HEK293 (cell line): ENCODE measurements at regions of chr7 and their contacts with region 1.

Region 1: DNA sequence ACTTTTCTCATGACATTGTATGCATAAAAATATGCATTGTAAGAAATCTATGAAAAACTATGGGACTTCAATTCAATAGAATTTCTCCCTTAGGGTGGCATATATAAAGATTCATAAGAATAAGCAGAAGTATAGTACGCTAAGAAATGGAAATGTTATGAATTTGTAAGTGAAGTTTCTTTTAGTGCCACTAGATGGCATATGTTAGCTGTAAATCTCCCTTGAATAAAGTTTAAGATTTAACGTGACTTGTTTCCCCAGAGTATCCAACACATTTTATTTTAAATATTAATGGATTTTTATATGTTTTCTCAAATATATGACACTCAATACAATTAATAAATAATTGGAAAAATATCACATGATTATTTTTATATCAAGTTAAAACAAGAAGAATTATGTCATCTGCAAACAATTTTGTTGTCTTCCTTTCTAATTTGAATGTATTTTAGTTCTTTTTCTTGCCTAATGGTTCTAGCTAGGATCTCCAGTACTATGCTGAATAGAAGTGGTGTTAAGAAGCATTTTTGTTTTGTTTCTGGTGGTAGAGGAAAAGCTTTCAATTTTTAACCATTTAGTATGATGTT is 287.2 kb downstream of the HGF start:
- H3K4me3 ChIP-seq: no peak overlapping the region
- H3K27ac ChIP-seq: no peak overlapping the region
- H3K4me1 ChIP-seq: no peaks in the 10 kb centered on the region
- CTCF ChIP-seq: no peak

Region 2: DNA sequence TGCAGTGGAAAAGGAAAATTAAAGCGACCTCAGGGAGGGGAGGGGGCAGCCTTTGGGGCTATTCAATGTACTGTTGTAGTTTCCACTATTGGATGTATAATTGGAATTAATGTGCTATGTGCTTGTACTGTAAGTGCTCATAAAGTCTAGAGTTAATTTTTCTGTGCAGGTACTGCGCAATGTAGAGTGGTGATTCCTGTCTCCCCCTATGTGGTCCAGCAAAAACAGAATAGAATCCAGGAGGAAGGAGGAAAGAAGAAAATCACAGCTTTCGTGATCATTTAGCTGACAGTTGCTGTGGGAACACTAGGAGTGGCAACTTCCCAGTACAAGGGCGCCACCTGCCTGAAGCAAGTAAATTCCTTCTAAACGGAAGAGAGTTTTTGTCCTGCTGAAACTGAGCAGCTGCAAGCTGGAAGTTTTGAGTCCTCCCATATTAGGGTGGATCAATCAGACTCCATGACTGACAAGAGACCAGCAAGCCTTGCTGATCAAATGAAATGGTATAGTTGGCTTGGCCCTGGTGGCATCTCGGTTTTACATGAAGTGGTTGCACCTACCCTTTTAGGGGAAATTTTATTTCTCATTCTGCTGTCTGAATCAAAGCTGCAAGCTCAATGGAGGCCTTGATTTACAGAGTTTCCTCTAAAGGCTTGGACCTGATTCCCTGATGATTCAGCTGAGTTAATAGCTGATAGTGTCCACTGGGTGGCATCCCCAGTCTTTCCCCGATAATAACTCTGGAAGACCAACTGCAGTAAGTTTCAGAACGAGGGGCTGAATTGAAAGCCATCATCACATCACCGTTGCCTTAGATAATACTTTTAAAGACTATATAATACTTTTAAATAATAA is 12.6 kb before region 1 on chr7:
- CTCF ChIA-PET with region 1: interaction called, 10 read pairs
- POLR2A ChIA-PET with region 1: no interaction called
- H3K4me3 ChIP-seq: no peak overlapping the region
- H3K27ac ChIP-seq: no peak overlapping the region
- H3K4me1 ChIP-seq: no peaks in the 10 kb centered on the region
- CTCF ChIP-seq: peak; percentile 77; the same call in 1 of the 2 replicates

Region 3: DNA sequence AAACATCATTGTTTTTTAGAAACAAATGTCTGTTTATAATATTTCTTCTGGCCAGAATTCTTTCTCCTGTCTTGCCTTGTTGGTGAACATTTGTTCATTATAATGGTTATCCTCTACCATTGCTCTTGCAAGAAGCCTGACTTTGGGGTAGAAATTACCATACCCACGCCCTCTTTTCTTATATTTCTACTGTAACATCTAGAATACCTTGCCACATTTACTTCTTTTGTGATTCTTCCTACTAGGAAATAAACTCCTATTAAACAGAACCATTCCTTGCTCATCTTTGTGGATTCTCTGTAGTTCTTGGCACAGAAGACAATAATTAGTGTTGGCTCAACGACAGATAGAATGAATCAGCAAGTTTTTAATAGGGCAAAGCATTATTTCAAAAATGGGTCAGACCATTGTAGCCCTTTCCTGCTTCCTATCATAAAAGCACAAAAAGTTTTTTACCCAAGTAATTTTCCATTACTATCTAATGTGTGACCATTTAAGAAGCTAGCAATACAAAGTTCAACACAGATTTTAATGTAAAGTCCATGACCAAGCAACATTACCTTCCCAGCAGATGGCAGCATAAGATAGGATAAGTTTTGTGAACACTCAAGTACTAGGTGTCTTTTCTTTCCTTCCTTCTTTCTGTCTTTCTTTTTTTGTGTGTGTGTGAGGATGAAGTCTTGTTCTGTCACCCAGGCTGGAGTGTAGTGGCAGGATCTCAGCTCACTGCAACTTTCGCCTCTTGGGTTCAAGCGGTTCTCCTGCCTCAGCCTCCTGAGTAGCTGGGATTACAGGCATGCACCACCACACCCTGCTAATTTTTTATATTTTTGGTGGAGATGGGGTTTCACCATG is 16.8 kb after region 1 on chr7:
- CTCF ChIA-PET with region 1: interaction called, 29 read pairs
- POLR2A ChIA-PET with region 1: no interaction called
- H3K4me3 ChIP-seq: no peak overlapping the region
- H3K27ac ChIP-seq: no peak overlapping the region
- H3K4me1 ChIP-seq: peaks cover 2% of the 10 kb centered on the region; the same call in 1 of the 2 replicates
- CTCF ChIP-seq: peak; percentile 70

Region 4: DNA sequence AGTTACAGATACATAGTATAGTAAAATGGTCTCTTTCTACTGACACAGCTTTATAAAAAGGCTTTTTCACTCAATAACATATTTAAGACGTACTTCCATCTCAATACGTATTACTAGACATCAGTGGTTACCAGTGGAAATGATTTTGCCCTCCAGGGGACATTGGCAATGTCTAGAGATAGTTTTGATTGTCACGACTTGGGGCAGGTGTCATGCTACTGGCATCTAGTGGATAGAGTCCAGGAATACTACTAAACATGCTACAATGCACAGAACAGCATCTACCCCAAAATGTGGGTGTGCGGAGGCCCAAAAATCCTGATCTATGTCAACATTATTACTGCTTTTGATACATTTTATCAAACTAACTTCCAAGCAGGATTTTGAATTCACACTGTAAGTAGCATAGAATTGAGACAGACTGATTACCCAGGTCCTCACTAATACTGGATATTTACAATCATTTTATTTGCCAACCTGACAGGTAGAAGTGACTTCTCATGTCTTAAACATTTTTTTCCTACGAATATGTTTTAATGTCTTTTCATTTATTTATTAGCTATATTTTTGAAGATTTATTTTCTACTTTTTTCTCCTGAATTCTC is 233.4 kb after region 1 on chr7:
- CTCF ChIA-PET with region 1: interaction called, 11 read pairs
- POLR2A ChIA-PET with region 1: no interaction called
- H3K4me3 ChIP-seq: no peak overlapping the region
- H3K27ac ChIP-seq: no peak overlapping the region
- H3K4me1 ChIP-seq: no peaks in the 10 kb centered on the region
- CTCF ChIP-seq: peak; percentile 64

Region 5: GRCh38 chr7:82017334-82017943 is 534.7 kb after region 1 on chr7:
- CTCF ChIA-PET with region 1: interaction called, 17 read pairs
- POLR2A ChIA-PET with region 1: no interaction called
- H3K4me3 ChIP-seq: no peak overlapping the region
- H3K27ac ChIP-seq: no peak overlapping the region
- H3K4me1 ChIP-seq: no peaks in the 10 kb centered on the region; the same call in 1 of the 2 replicates
- CTCF ChIP-seq: no peak